ENCODE measurements at regions of chr12 and their contacts with region 1.

Region 1: DNA sequence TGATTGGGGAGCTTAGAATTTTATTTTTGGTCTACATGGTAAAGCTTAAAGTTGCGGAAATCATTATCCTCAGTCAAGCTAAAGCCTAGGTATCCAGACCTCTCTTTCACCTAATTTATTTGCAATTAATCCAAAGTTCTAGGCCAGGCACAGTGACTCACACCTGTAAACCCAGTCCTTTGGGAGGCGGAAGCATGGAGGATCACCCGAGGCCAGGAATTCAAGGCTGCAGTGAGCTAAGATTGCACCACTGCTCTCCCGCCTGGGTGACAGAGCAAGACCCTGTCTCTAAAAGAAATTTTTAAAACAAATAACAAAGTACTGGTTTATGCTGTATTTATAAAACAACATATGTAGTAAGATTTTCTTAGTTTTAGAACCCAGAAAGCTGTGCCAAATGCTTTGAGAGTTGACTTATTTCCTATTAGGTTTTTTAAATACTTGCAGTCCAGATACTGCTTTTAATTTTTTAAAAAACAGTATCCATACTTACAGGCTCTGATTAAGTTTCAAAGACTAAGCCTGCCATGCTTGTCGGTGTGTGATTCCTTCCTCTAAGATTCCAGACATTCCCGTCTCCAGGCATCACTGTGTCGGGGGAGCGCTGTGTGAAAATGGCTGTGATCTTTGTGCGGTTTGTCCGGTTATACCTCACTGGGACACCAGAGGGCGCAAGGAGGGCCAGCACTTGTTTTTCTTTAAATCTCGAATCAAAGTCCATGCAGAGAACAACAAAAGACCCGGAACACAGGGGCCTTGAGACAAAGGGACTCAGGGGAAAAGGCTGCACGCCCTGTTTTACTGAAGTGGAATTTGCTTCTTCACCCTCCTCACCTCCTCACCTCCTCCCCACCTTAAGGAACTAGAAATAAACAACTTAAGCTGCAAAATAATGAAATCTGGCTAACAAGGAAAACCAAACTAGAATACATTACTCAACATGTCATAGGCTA is 24.6 kb upstream of the TMPO start:
- DNase-seq: peak; percentile 75 to 85
- H3K4me3 ChIP-seq: peak overlapping the region; percentile 51
- H3K27ac ChIP-seq: peak overlapping the region; percentile 70
- H3K4me1 ChIP-seq: peaks cover 14% of the 10 kb centered on the region
- H3K27me3 ChIP-seq: no peaks in the 10 kb centered on the region
- CTCF ChIP-seq: peak; percentile 91

Region 2: GRCh38 chr12:98424726-98425401 is 65.9 kb before region 1 on chr12:
- CTCF ChIA-PET with region 1: interaction called, 6 read pairs
- POLR2A ChIA-PET with region 1: interaction called, 3 read pairs
- intact Hi-C with region 1: loop called (anchors 2 kb)
- DNase-seq: peak; percentile 83 to 91
- H3K4me3 ChIP-seq: no peak overlapping the region
- H3K27ac ChIP-seq: 0 out of 2 replicates have a peak overlapping the region, but pooled peaks have one; percentile 16
- H3K4me1 ChIP-seq: peaks cover 6% of the 10 kb centered on the region
- H3K27me3 ChIP-seq: no peaks in the 10 kb centered on the region
- CTCF ChIP-seq: peak; percentile 78

Region 3: GRCh38 chr12:98439981-98440581 is 50.7 kb before region 1 on chr12:
- CTCF ChIA-PET with region 1: interaction called, 9 read pairs
- POLR2A ChIA-PET with region 1: no interaction called
- intact Hi-C with region 1: loop called (anchors 2 kb)
- DNase-seq: peak; percentile 65 to 88
- H3K4me3 ChIP-seq: no peak overlapping the region
- H3K27ac ChIP-seq: no peak overlapping the region
- H3K4me1 ChIP-seq: peaks cover 8% of the 10 kb centered on the region
- H3K27me3 ChIP-seq: no peaks in the 10 kb centered on the region
- CTCF ChIP-seq: no peak

Region 4: GRCh38 chr12:98456576-98457573 is 33.9 kb before region 1 on chr12:
- CTCF ChIA-PET with region 1: no interaction called
- POLR2A ChIA-PET with region 1: no interaction called
- intact Hi-C with region 1: no loop called
- DNase-seq: peak in 1 of 2 experiments; percentile 52
- H3K4me3 ChIP-seq: no peak overlapping the region
- H3K27ac ChIP-seq: no peak overlapping the region
- H3K4me1 ChIP-seq: no peaks in the 10 kb centered on the region
- H3K27me3 ChIP-seq: no peaks in the 10 kb centered on the region
- CTCF ChIP-seq: no peak

Region 5: GRCh38 chr12:98470469-98471082 is 20.2 kb before region 1 on chr12:
- CTCF ChIA-PET with region 1: interaction called, 4 read pairs
- POLR2A ChIA-PET with region 1: no interaction called
- intact Hi-C with region 1: loop called (anchors 2 kb)
- DNase-seq: peak in 1 of 2 experiments; percentile 49
- H3K4me3 ChIP-seq: no peak overlapping the region
- H3K27ac ChIP-seq: no peak overlapping the region
- H3K4me1 ChIP-seq: peaks cover 10% of the 10 kb centered on the region
- H3K27me3 ChIP-seq: no peaks in the 10 kb centered on the region
- CTCF ChIP-seq: no peak

Region 6: GRCh38 chr12:98503592-98504367 is 13.0 kb after region 1 on chr12:
- CTCF ChIA-PET with region 1: no interaction called
- POLR2A ChIA-PET with region 1: no interaction called
- intact Hi-C with region 1: loop called (anchors 1 kb)
- DNase-seq: peak; percentile 73 to 88
- H3K4me3 ChIP-seq: peak overlapping the region; percentile 75
- H3K27ac ChIP-seq: peak overlapping the region; percentile 79
- H3K4me1 ChIP-seq: no peaks in the 10 kb centered on the region
- H3K27me3 ChIP-seq: no peaks in the 10 kb centered on the region
- CTCF ChIP-seq: no peak

Region 7: DNA sequence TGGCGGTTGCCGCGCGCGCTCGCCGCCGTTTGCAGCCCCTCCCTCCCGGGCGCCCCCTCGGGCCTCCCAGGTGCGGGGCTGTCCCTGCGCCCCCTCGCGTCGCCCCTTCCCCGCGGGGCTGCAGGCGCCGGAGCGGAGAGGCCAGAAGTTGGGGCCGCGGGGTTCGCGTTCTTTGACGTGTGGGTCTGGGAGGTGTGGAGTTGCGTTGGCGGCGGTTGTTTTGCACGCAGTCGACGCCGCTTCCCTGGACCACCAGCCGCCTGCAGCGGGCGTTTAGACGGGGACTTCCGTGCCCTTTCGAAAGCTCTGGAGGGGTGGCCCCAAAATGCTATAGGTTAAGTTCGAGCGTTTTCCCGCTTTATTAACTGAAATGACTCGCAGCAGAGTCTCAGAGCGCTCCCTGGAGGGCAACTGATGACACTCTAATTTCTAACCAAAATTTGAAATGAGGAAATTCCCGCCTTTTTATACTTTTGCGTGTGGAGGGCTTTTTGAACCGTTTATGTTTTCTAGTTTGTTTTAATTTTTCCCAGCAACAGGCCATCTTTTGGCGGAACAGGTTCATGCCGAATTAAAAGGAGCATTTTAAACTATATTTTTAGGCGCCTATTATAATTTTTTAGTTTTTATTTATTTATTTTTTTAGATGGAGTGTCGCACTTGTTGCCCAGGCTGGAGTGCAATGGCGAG is 25.6 kb after region 1 on chr12:
- CTCF ChIA-PET with region 1: interaction called, 5 read pairs
- POLR2A ChIA-PET with region 1: interaction called, 3 read pairs
- intact Hi-C with region 1: loop called (anchors 1 kb)
- DNase-seq: peak; percentile 65 to 80
- H3K4me3 ChIP-seq: peak overlapping the region; percentile 90
- H3K27ac ChIP-seq: peak overlapping the region; percentile 74
- H3K4me1 ChIP-seq: peaks cover 24% of the 10 kb centered on the region
- H3K27me3 ChIP-seq: no peaks in the 10 kb centered on the region
- CTCF ChIP-seq: peak; percentile 74

Measured in PC-9 (cell line).